PC-3 (cell line): ENCODE measurements at regions of chr3 and their contacts with region 1.

Region 1: GRCh38 chr3:17372362-17373210 is 369.8 kb downstream of the TBC1D5 start:
- DNase-seq: peak; percentile 60
- ATAC-seq: peak; percentile 98
- H3K4me3 ChIP-seq: no peak overlapping the region
- H3K27ac ChIP-seq: no peak overlapping the region
- H3K4me1 ChIP-seq: peaks cover 10% of the 10 kb centered on the region
- H3K27me3 ChIP-seq: no peaks in the 10 kb centered on the region
- CTCF ChIP-seq: no peak

Region 2: GRCh38 chr3:17307482-17307881 is 65.1 kb before region 1 on chr3:
- CTCF ChIA-PET with region 1: no interaction called
- POLR2A ChIA-PET with region 1: no interaction called
- intact Hi-C with region 1: loop called (anchors 5 kb)
- DNase-seq: peak; percentile 45
- ATAC-seq: peak; percentile 80
- H3K4me3 ChIP-seq: no peak overlapping the region
- H3K27ac ChIP-seq: no peak overlapping the region
- H3K4me1 ChIP-seq: no peaks in the 10 kb centered on the region
- H3K27me3 ChIP-seq: no peaks in the 10 kb centered on the region
- CTCF ChIP-seq: peak; percentile 63

Region 3: DNA sequence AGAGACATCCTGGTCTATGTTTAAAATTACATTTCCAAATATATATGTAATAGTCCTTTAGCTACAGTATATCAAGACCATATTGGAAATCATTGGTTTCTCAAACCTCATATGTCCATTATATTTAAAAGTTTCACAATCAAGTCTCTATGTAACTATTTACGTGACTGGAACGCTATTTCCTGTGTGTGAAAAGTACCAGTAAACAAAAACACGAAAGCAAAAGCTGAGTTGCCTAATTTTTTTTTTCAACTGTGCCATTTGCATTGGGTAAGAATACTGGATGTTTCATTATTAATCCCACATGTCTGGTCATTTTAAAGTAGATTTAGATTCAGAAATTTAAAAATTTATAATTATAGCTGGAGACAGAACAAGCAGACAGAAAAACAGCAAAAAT is 11.6 kb before region 1 on chr3:
- CTCF ChIA-PET with region 1: no interaction called
- POLR2A ChIA-PET with region 1: no interaction called
- intact Hi-C with region 1: loop called (anchors 1 kb)
- DNase-seq: no peak
- ATAC-seq: no peak
- H3K4me3 ChIP-seq: no peak overlapping the region
- H3K27ac ChIP-seq: no peak overlapping the region
- H3K4me1 ChIP-seq: no peaks in the 10 kb centered on the region
- H3K27me3 ChIP-seq: no peaks in the 10 kb centered on the region
- CTCF ChIP-seq: no peak